ENCODE measurements at regions of chr2 and their contacts with region 1.

Region 1: GRCh38 chr2:99559075-99559662 is 69.4 kb upstream of the REV1 start:
- DNase-seq: peak; percentile 67 to 71
- ATAC-seq: peak; percentile 91 to 98
- H3K4me3 ChIP-seq: no peak overlapping the region
- H3K27ac ChIP-seq: no peak overlapping the region
- H3K4me1 ChIP-seq: no peaks in the 10 kb centered on the region
- CTCF ChIP-seq: peak; percentile 94
- EP300 ChIP-seq: no peak
- POLR2A ChIP-seq: no peak
- RAD21 ChIP-seq: peak; percentile 94 to 96

Region 2: DNA sequence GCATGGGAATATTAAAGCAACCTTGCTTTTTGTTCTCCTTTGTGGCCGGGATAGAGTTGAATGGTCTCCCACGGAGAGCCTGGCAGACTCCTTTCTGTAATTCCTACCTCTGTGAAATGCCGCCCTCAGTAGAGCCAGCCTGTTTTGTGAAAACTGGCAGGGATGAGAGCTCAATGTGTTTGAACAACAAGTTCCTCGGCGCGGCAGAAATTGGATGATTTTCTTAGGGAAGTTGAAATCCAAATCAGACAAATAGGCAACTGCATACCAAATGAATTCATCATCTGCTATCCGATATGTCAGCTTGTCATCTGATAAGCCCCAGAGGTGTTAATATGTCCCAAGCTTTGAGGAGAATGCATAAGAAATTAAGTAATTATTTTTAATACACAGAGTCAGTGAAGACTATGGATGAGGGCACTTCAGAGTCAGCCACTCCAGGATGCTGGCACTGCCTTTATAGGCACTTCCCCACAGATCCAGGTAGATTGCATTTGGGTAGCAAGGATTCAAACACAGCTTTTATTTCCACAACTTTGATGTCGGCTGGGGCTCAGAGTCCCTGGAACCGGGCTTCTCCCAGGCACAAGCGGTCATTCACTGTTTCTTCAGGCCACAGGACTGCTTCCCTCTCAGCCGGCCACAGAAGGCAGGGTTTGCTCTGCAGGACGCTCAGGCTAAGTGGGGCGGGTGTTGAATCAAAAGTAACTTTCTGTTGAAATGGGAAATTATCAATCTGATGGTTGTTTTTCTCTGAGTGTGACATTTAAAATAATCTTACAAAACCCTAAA is 13.4 kb after region 1 on chr2:
- CTCF ChIA-PET with region 1: interaction called, 22 read pairs
- POLR2A ChIA-PET with region 1: no interaction called
- DNase-seq: no peak
- ATAC-seq: no peak
- H3K4me3 ChIP-seq: no peak overlapping the region
- H3K27ac ChIP-seq: no peak overlapping the region
- H3K4me1 ChIP-seq: no peaks in the 10 kb centered on the region
- CTCF ChIP-seq: no peak
- EP300 ChIP-seq: no peak
- POLR2A ChIP-seq: no peak
- RAD21 ChIP-seq: no peak

Region 3: DNA sequence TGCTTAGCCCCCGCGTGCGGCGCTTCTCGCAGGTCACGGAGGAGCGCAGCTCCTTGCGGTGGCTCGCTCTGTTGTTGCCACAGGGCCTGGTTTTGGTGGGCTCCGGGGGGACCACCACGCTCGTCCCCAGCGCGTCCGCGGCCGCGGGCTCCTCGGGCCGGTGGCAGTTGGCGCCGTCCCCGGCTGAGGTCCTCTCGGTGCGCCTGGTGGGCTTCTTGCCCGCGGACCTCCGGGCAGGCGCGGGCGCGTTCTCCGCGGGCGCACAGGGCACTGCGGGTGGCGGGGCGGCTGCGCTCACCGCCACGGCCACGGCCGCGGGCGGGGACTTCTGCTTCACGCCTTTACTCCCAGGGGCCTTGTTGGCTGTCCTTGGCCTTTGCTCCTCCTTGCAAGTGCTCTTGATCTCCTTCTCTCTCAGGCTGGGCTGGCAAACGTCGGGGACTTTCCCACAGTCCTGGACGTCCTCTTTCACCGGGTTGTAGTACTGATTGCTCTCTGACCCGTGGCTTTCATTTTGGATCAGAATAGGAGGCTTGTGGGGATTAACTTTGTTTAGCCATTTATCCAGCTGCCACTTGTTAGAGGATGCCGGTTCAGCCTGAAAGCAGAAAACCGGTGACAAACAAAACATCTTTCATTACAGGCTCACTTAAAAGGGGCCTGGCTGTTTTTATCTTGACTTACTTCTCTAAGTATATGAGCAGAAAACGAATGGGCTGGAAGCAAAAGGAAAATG is 34.7 kb after region 1 on chr2:
- CTCF ChIA-PET with region 1: interaction called, 12 read pairs
- POLR2A ChIA-PET with region 1: no interaction called
- DNase-seq: no peak
- ATAC-seq: no peak
- H3K4me3 ChIP-seq: no peak overlapping the region
- H3K27ac ChIP-seq: no peak overlapping the region
- H3K4me1 ChIP-seq: no peaks in the 10 kb centered on the region
- CTCF ChIP-seq: no peak
- EP300 ChIP-seq: no peak
- POLR2A ChIP-seq: no peak
- RAD21 ChIP-seq: no peak

Region 4: GRCh38 chr2:99770876-99771275 is 211.7 kb after region 1 on chr2:
- CTCF ChIA-PET with region 1: no interaction called
- POLR2A ChIA-PET with region 1: no interaction called
- DNase-seq: no peak
- ATAC-seq: no peak
- H3K4me3 ChIP-seq: no peak overlapping the region
- H3K27ac ChIP-seq: no peak overlapping the region
- H3K4me1 ChIP-seq: no peaks in the 10 kb centered on the region
- CTCF ChIP-seq: no peak
- EP300 ChIP-seq: no peak
- POLR2A ChIP-seq: no peak
- RAD21 ChIP-seq: no peak

Region 5: DNA sequence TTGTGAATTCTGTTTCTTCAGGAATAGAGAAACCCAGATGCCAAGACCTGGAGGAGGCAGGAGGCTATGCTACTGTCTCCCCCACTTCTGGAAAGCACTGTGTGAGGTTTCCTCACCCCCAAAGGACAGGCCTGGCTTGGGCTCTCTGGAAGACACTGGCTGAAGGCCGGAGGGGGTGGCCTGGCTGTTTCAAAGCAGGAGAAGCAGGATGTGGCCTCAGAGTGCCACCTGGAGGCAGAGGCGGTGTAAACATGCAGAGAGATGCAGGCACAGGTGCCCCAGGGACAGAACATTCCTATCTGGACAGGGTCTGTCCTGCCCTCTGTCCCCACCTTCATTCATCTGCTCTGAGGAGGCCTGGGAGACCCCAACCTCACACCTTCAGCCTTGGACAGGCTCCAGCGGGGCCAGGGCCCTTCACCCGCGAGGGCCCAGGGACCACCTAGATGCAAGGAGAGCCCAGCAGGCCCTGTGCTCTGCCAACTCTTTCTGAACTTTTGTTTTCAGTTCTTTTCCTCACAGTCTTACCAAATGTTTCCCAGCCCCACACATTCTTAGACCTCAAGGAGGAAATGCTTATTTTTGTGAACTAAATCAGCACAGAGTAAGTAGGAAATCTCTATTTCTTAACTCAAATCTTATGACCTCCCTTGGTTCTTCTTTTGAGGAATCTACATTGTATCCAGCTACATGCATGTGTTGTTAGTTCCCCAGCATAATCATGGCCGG is 683.9 kb after region 1 on chr2:
- CTCF ChIA-PET with region 1: interaction called, 31 read pairs
- POLR2A ChIA-PET with region 1: no interaction called
- DNase-seq: peak; percentile 43 to 51
- ATAC-seq: peak; percentile 80 to 90; a peak in 5 of 6 replicates
- H3K4me3 ChIP-seq: no peak overlapping the region
- H3K27ac ChIP-seq: no peak overlapping the region
- H3K4me1 ChIP-seq: no peaks in the 10 kb centered on the region
- CTCF ChIP-seq: peak; percentile 76
- EP300 ChIP-seq: no peak
- POLR2A ChIP-seq: no peak
- RAD21 ChIP-seq: peak; percentile 86 to 90

Measured in A549 (cell line).